AG04450 (cell line): ENCODE measurements at regions of chr5 and their contacts with region 1.

Region 1: GRCh38 chr5:61331407-61332357 is at the start of gene ZSWIM6:
- DNase-seq: peak; percentile 99
- H3K4me3 ChIP-seq: peak within 1 kb of the TSS; percentile 88
- H3K27ac ChIP-seq: peak within 1 kb of the TSS; percentile 82
- H3K27me3 ChIP-seq: no peaks in the 10 kb centered on the region
- CTCF ChIP-seq: no peak
- polyA plus RNA-seq, gene ZSWIM6: 18.6 and 18.9 TPM in 2 replicates

Region 2: DNA sequence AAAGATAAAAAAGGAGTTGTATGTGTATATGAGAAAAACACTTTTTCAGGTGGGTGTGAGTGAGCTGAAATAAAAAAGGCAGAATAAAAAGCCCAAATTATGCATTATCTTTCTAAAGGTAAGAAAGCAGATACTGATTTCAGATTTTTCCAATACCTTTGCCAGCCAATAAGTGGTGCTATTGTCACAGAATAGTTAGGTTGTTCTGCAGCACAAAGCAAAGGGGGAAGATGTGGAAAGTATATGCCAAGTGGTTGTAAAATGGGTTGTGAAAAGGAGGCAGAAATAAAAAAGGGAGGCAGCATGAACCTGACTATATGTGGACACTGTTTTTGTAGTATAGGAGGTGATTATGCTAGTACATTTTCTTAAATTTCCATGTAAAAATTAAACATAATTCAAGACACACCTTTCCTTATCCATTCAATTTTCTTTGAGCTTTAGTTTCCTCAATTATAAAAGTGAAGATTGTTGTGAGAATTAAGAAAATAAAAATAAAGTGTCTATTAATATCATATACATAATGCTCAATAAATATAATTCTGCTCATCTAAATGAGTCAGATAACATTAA is 276.2 kb before region 1 on chr5:
- CTCF ChIA-PET with region 1: interaction called, 35 read pairs
- POLR2A ChIA-PET with region 1: interaction called, 3 read pairs
- DNase-seq: no peak
- H3K4me3 ChIP-seq: no peak overlapping the region
- H3K27ac ChIP-seq: no peak overlapping the region
- H3K27me3 ChIP-seq: no peaks in the 10 kb centered on the region
- CTCF ChIP-seq: peak; percentile 81

Region 3: DNA sequence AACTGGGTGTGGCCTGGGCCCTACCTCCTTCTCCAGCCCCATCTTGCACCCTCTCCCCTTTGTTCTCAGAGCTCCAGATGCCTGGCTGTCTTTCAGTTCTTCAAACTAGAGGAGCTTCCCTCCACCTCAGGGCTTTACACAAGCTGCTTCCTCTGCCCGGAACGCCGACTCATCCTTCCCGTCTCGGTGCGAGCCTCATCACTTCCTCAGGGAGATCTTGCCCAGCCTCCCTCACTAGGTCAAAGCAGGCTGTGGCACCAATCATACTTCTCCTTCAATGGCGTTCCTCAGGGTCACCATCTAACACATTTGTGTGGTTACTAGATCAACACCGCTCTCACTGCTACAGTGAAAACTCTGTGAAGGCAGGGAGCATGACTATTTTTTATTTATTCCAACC is 55.8 kb before region 1 on chr5:
- CTCF ChIA-PET with region 1: interaction called, 4 read pairs
- POLR2A ChIA-PET with region 1: interaction called, 19 read pairs
- DNase-seq: peak; percentile 36
- H3K4me3 ChIP-seq: no peak overlapping the region
- H3K27ac ChIP-seq: peak overlapping the region; percentile 59
- H3K27me3 ChIP-seq: no peaks in the 10 kb centered on the region
- CTCF ChIP-seq: no peak

Region 4: DNA sequence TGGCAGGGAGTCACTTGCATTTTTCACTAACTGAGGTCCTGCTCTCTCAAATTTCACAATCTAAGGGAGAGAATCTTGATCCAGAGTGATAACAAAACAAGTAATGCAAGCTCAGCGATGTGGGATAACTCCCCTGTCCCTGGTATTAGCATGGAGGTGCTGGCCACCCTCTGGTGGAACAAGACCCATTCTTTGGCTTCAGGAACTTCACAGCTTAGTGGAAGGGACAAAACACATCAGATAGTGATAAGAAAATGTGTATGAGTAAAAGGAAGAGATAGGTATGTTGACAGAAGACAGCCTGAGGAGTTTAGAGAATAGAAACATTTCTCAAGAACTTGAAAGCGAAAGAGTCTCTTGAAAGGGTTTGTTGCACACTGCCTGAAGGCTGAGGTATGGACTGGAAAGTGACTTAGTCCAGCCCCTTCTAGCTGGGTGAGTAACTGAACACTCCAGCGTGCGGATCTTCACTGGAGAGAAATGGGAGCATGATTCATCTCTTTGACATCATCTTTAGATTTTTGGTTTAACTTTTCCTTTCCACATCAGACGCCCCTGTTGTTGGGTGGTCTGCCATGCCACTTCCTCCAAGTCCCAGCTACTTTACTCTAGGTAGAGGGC is 25.1 kb before region 1 on chr5:
- CTCF ChIA-PET with region 1: interaction called, 4 read pairs
- POLR2A ChIA-PET with region 1: interaction called, 48 read pairs
- DNase-seq: no peak
- H3K4me3 ChIP-seq: peak overlapping the region; percentile 33
- H3K27ac ChIP-seq: peak overlapping the region; percentile 80
- H3K27me3 ChIP-seq: no peaks in the 10 kb centered on the region
- CTCF ChIP-seq: no peak

Region 5: GRCh38 chr5:61408476-61409168 is 76.9 kb after region 1 on chr5:
- CTCF ChIA-PET with region 1: interaction called, 3 read pairs
- POLR2A ChIA-PET with region 1: interaction called, 21 read pairs
- DNase-seq: peak; percentile 99
- H3K4me3 ChIP-seq: peak overlapping the region; percentile 26; the same call in 1 of the 2 replicates
- H3K27ac ChIP-seq: peak overlapping the region; percentile 91
- H3K27me3 ChIP-seq: no peaks in the 10 kb centered on the region
- CTCF ChIP-seq: no peak